ENCODE measurements at regions of chr7 and their contacts with region 1.

Region 1: DNA sequence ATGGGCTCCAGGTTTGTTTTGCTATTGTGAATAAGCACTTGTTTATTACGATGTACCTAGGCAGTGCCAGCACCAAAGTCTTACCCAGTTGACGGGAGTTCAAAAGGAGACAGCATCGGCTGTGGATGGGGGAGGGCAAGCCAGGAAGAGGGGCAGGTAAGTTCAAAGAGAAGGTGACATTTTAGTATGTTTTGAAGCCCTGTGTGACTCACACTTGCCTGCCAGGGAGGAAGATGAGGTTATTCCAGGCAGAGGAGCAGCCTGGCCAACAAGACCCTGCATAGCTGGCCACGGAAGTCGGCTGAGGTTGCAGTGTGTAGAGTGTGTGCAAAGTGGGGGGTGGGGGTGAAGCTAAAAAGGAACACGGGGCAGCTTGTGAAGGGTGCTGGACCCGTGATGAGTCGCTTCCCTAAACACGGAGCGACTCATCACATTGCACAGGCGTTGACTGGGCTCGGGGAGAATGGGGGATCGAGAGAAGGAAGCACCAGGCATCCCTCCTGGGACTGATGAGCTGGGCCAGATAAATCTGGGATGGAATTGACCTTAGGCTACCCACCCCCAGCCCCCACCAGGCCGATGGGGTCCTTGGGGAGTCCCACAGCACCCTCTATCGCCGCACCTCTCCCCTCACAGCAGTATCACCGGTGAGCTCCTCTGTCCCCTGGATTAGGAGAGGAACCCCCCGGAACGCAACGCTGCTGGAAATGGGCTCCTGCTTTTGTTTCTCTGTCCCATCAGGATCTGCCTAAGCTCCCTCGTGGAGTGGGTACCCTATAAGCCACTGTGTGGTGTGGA is 97.9 kb upstream of the IKZF1 start:
- DNase-seq: no peak
- H3K4me3 ChIP-seq: no peak overlapping the region
- H3K4me3 Mint-ChIP-seq: no peak overlapping the region
- H3K27ac Mint-ChIP-seq: no peak overlapping the region
- H3K4me1 ChIP-seq: no peaks in the 10 kb centered on the region
- H3K4me1 Mint-ChIP-seq: peaks cover 12% of the 10 kb centered on the region
- H3K27me3 ChIP-seq: no peaks in the 10 kb centered on the region; the same call in 1 of the 2 replicates
- H3K27me3 Mint-ChIP-seq: peaks cover 37% of the 10 kb centered on the region
- CTCF ChIP-seq: no peak

Region 2: DNA sequence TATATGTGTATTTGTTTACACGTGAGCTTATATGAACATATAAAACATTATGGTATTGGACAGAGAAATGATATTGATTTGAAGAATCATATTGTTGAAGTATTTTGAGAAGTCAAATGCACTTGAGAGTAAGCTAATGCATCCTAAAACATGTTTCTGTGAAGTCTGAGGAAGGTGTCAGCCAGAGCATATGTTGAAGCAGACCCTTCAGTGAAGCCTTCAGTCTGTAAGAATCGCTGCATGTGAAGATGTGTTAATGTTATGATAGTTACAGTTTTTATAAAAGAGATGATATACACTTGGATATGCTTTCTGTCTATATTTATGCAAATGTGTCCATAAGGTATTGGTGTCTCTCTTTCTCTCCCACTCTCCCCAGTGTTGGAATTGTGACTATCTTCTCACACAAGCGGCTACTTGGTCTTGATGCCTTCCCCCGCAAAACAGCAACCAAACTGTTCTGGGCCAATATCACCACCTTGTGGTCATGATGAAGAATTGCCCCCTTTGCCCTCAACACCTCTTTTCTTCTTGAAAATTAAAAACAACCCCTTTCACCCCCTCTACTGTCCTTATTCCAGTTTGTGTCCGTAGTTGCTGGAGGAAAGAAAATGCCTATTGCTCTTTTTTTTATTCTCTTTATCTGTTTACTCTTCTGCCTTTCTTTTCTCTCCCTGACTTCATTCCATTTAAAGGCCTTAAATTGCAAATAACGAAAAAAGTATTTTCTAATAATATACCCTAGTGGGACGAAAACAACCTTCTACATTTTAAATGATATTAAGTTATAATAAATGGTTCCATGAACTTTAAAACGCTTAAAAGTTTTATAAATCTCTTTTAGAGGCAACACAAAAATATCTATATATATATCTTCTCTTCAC is 162.7 kb after region 1 on chr7:
- CTCF ChIA-PET with region 1: no interaction called
- POLR2A ChIA-PET with region 1: no interaction called
- intact Hi-C with region 1: loop called (anchors 1 kb)
- DNase-seq: peak in 1 of 2 experiments; percentile 40
- H3K4me3 ChIP-seq: no peak overlapping the region
- H3K4me3 Mint-ChIP-seq: no peak overlapping the region
- H3K27ac Mint-ChIP-seq: no peak overlapping the region
- H3K4me1 ChIP-seq: no peaks in the 10 kb centered on the region
- H3K4me1 Mint-ChIP-seq: no peaks in the 10 kb centered on the region
- H3K27me3 ChIP-seq: no peaks in the 10 kb centered on the region; the same call in 1 of the 2 replicates
- H3K27me3 Mint-ChIP-seq: peaks cover 10% of the 10 kb centered on the region
- CTCF ChIP-seq: peak; percentile 39 to 73

Region 3: GRCh38 chr7:50418086-50418515 is 211.4 kb after region 1 on chr7:
- CTCF ChIA-PET with region 1: interaction called, 8 read pairs
- POLR2A ChIA-PET with region 1: no interaction called
- intact Hi-C with region 1: loop called (anchors 1 kb)
- DNase-seq: peak; percentile 86 to 89
- H3K4me3 ChIP-seq: no peak overlapping the region
- H3K4me3 Mint-ChIP-seq: no peak overlapping the region
- H3K27ac Mint-ChIP-seq: no peak overlapping the region
- H3K4me1 ChIP-seq: no peaks in the 10 kb centered on the region; the same call in 1 of the 2 replicates
- H3K4me1 Mint-ChIP-seq: peaks cover 2% of the 10 kb centered on the region
- H3K27me3 ChIP-seq: no peaks in the 10 kb centered on the region
- H3K27me3 Mint-ChIP-seq: no peaks in the 10 kb centered on the region
- CTCF ChIP-seq: peak; percentile 88 to 97

Region 4: GRCh38 chr7:50679218-50680007 is 472.8 kb after region 1 on chr7:
- CTCF ChIA-PET with region 1: no interaction called
- POLR2A ChIA-PET with region 1: no interaction called
- intact Hi-C with region 1: loop called (anchors 10 kb)
- DNase-seq: peak in 1 of 2 experiments; percentile 22
- H3K4me3 ChIP-seq: no peak overlapping the region
- H3K4me3 Mint-ChIP-seq: no peak overlapping the region
- H3K27ac Mint-ChIP-seq: no peak overlapping the region
- H3K4me1 ChIP-seq: no peaks in the 10 kb centered on the region
- H3K4me1 Mint-ChIP-seq: no peaks in the 10 kb centered on the region
- H3K27me3 ChIP-seq: no peaks in the 10 kb centered on the region
- H3K27me3 Mint-ChIP-seq: no peaks in the 10 kb centered on the region
- CTCF ChIP-seq: peak in 1 of 2 experiments; percentile 15

Measured in Caco-2 (cell line).